GM13976 (cell line): ENCODE measurements at regions of chr19 and their contacts with region 1.

Region 1: GRCh38 chr19:860481-861101 is 1.1 kb downstream of the CFD start:
- DNase-seq: peak; percentile 87
- CTCF ChIP-seq: no peak

Region 2: DNA sequence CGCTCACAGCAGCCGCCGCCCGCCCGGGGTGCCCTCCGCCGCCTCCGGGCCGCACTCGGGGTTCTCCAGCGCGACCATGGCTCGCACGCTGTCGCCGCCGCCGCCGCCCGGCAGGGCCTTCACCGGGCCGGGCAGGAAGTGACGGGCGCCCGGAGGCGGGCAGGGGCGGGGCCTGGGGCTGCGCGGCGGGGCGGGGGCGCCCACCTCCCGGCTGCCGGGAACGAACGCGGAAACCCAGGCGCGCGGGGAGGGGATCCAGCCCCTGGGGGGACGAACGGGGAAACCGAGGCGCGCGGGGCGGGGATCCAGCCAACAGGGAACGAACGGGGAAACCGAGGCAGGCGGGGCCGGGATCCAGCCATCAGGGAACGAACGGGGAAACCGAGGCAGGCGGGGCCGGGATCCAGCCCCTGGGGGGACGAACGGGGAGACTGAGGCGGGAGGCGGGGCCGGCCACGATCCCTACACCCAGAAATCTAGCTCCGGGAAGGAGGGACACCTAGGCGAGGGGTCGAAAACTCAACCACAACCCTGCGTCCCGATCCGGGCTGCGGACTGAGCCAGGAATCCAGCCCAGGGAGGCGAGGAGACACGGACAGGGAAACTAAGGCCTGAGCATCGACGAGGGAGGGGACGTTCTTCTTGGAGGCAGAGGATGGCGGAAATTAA is 52.6 kb after region 1 on chr19 and contains the start of gene R3HDM4:
- in situ Hi-C with region 1: loop called (anchors 10 kb)
- DNase-seq: peak; percentile 95
- CTCF ChIP-seq: no peak